Spleen (tissue), 13 donors: ENCODE measurements at regions of chr16 and their contacts with region 1.

Region 1: DNA sequence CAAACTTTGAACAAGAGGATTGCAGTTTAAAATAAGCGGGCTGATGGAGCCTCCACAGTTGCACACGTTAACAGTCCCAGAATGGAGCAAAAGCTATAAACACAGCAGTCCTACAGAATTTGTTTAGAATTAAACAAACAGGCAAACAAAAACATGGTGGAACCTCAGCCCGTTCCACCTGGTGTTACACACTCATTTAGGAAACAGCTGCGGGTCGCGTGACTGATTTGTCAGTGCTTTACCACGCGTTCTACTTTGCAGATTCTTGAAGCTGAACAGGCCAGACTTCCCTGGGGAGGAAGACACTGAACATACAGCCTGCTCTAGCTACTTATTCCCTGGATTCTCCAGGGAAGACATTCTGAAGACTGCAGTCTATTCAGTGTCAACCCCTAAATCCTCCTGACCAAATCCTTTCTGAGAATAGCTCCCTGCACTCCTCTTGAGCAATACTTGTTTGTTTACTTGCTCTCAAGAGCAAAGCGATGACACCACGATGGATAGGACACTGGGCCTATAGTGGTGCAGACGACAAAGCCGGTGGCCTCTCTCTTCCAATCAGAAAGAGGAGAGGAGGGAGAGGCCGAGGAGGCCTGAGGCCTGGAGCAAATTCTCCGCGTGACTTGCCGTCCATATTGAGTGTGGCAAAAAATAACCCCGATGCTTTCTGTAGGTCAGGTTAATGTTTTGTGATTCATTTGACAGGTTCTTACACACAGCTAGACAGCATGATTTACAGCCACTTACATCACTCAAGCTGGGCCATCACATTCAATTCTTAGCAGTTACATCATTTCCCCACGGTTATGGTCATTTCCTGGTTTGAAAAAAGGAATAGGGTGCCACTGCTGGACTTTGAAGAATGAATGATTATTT is 4.0 kb upstream of the MAP1LC3B start:
- DNase-seq: peak; percentile 94
- H3K4me3 ChIP-seq: peak overlapping the region in 4 of 8 donors; percentile 2 to 57 (median 11)
- H3K27ac ChIP-seq: peak overlapping the region; percentile 75 to 95 (median 90)
- H3K4me1 ChIP-seq: peaks cover 9 to 74% (median 51%) of the 10 kb centered on the region in 6 donors
- H3K27me3 ChIP-seq: no peaks in the 10 kb centered on the region
- CTCF ChIP-seq: no peak
- POLR2A ChIP-seq: peak in 2 of 3 donors; percentile 6 to 64

Region 2: DNA sequence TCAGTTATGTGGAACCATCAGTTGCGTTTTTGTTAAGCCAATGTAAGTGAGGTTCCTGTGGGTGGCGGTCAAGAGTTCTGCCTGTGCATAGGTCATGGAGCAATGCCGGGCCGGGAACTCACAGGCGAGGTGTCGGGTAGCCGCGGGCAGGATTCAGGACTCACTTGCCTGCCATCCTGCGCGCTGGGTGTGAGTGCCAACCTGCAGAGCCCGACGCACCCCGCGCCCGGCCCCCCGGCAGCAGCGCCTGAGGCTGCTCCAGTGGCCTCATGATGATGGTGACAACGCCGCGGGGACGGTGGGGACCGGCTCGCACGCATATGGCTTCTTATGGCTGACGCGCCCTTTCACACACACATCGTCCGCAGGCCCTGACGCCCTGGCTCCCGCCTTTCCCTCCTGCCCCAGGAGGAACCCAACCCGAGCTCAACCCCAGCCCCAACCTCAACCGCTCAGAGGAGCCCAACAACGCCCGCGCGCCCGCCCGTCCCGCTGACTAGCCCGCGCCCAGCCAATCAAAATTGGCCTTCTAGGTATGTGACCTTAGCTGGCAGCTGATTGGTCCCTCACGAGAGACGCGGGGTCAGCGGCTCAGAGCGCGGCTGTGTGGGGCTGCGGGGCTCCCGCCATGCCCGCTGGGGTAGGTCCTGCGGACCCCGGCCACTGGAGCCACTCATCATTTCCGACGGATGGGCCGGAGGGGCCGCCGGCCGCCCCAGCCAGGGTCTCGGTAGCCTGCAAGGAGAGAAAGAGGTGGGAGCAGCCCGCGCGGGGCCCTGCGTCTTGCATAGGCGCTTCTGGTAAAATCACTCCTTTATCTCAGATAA is 71.0 kb before region 1 on chr16 and contains the start of gene C16orf95:
- intact Hi-C with region 1: loop called (anchors 5 kb)
- DNase-seq: peak; percentile 96
- H3K4me3 ChIP-seq: peak within 1 kb of the TSS; percentile 67 to 91 (median 83)
- H3K27ac ChIP-seq: peak within 1 kb of the TSS; percentile 78 to 96 (median 90)
- H3K4me1 ChIP-seq: peaks cover 7 to 22% (median 10%) of the 10 kb centered on the region in 6 donors
- H3K27me3 ChIP-seq: no peaks in the 10 kb centered on the region
- CTCF ChIP-seq: peak in 10 of 11 experiments; percentile 28 to 65 (median 52)
- POLR2A ChIP-seq: peak in 1 of 3 donors; percentile 86
- total RNA-seq, gene C16orf95: 1.0 to 2.6 (median 2.0) TPM in 5 of 7 donors, not detected in the others